ENCODE measurements at regions of chr3 and their contacts with region 1.

Region 1: DNA sequence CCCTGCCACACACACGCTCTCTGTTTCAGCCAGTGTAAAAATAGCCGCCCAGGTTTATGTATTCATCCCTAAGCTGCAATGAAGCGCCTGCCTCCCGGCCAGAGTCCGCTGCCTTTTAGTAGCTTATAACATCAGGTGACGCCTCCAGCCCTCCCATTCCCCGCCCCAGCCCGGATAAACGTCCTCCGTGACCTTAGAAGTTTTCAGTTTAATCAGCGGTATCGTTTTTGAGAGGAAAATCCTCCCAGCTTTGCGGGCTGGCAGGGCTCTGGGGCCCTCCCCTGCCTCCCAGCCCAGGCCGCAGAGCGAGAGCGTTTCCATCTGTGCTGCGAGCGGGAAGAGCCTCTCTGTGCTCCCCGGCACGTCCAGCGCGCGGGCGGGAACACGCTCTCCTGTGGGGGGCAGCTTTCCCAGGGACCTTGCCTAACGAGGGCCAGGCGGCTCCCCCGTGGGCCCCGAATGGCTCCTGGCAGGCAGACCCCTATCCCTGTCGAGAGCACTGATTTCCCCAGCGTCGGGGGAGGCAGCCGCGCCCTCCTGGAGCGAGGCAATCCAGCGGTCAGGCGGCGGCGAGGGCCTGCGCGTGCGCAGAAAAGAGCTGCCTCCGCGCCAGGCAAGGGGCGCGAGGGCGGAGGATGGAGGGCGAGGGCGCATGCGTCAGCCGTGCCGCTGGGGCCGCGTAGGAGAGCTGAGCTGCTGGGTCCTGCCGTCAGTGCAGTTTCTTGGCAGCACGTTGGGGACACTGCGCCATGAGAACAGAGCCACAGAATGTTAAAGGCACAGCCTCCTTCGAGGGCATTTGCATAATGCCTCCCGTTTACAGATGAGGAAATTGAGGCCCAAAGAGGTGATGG is 71.1 kb downstream of the CCNL1 start:
- DNase-seq: peak; percentile 95
- H3K4me3 ChIP-seq: peak overlapping the region; percentile 40 to 59
- H3K27ac ChIP-seq: peak overlapping the region; percentile 99
- H3K4me1 ChIP-seq: peaks cover 26% of the 10 kb centered on the region
- H3K27me3 ChIP-seq: no peaks in the 10 kb centered on the region
- CTCF ChIP-seq: peak in 3 of 4 experiments; percentile 20 to 42 (median 23)
- POLR2A ChIP-seq: peak; percentile 69

Region 2: DNA sequence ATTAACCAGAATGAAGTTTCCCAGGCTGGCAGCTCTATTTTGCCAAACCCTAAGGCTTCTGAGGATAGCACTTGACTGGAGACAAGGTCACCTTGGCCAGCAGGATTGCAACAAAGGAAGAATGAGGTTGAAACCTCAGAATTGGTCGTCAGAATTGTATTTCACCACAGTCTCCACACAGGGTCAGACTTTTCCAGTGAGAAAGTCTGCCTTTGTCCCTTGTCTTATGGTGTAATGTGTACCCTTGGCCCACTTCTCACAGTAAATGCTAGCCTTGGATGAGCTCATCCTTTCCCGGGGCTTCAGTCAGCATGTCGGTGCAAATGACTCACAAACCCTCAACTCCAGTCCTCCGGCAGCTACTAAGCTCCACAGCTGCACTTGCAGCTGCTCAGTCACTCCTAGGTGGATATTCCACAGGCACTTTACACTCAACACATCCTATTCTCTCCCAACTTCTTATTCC is 553.6 kb before region 1 on chr3:
- intact Hi-C with region 1: loop called (anchors 5 kb)
- DNase-seq: no peak
- H3K4me3 ChIP-seq: no peak overlapping the region
- H3K27ac ChIP-seq: peak overlapping the region; percentile 1 to 15
- H3K4me1 ChIP-seq: no peaks in the 10 kb centered on the region
- H3K27me3 ChIP-seq: no peaks in the 10 kb centered on the region
- CTCF ChIP-seq: peak in 1 of 4 experiments; percentile 24
- POLR2A ChIP-seq: no peak

Region 3: GRCh38 chr3:156554842-156555687 is 533.8 kb before region 1 on chr3 and contains the start of gene SSR3:
- intact Hi-C with region 1: loop called (anchors 5 kb)
- DNase-seq: peak; percentile 99
- H3K4me3 ChIP-seq: peak within 1 kb of the TSS; percentile 60 to 87
- H3K27ac ChIP-seq: peak within 1 kb of the TSS; percentile 78 to 79
- H3K4me1 ChIP-seq: no peaks in the 10 kb centered on the region
- H3K27me3 ChIP-seq: no peaks in the 10 kb centered on the region
- CTCF ChIP-seq: peak in 2 of 4 experiments; percentile 65 to 85
- POLR2A ChIP-seq: peak; percentile 83
- total RNA-seq, gene SSR3: 102 to 142 TPM

Region 4: GRCh38 chr3:157130467-157131251 is 41.8 kb after region 1 on chr3:
- intact Hi-C with region 1: loop called (anchors 2 kb)
- DNase-seq: peak; percentile 47
- H3K4me3 ChIP-seq: no peak overlapping the region
- H3K27ac ChIP-seq: peak overlapping the region; percentile 93 to 94
- H3K4me1 ChIP-seq: peaks cover 44% of the 10 kb centered on the region
- H3K27me3 ChIP-seq: no peaks in the 10 kb centered on the region
- CTCF ChIP-seq: peak; percentile 45 to 78 (median 68)
- POLR2A ChIP-seq: no peak

Region 5: GRCh38 chr3:157327018-157327417 is 238.2 kb after region 1 on chr3:
- intact Hi-C with region 1: no loop called
- DNase-seq: no peak
- H3K4me3 ChIP-seq: no peak overlapping the region
- H3K27ac ChIP-seq: no peak overlapping the region
- H3K4me1 ChIP-seq: no peaks in the 10 kb centered on the region
- H3K27me3 ChIP-seq: no peaks in the 10 kb centered on the region
- CTCF ChIP-seq: no peak
- POLR2A ChIP-seq: no peak